PC-9 (cell line): ENCODE measurements at regions of chrX and their contacts with region 1.

Region 1: DNA sequence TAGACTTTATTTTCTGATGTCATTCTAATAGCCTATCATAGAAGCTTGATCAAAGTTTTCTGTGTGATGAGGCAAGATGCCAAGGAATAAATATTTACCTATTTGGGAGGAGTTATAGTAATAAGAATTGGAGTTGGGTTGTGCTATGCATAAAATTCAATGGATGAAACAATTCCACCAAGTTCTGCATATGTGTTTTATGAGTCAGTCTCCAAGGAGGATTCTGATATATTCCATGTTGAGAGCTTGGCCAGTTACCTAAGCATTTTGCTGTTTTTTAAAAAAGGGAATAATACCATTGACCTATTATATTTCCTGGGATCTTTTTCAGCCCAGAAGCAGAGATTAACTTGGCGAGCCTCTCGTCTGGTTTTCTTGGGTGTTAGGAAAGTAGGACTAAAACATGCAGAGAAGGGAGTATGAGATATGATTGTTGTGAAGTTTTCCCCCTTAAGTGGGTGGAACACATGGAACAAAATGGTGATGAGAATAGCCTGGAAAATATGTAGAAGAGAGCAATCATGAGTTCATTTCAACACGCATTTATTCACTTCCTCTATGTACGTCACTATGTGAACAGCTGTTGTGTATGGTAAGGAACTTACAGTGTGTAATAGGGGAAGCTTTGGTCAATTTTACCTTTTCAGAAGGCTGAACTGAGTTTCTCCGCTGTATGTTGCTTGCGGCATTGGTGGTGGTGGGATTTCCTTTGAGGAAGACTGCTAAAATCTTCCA is 39.2 kb downstream of the POLA1 start:
- DNase-seq: no peak
- H3K4me3 ChIP-seq: no peak overlapping the region
- H3K27ac ChIP-seq: no peak overlapping the region
- H3K4me1 ChIP-seq: no peaks in the 10 kb centered on the region
- H3K27me3 ChIP-seq: no peaks in the 10 kb centered on the region
- CTCF ChIP-seq: no peak

Region 2: GRCh38 chrX:24553011-24553410 is 179.9 kb before region 1 on chrX:
- CTCF ChIA-PET with region 1: no interaction called
- POLR2A ChIA-PET with region 1: no interaction called
- intact Hi-C with region 1: no loop called
- DNase-seq: no peak
- H3K4me3 ChIP-seq: no peak overlapping the region
- H3K27ac ChIP-seq: no peak overlapping the region
- H3K4me1 ChIP-seq: no peaks in the 10 kb centered on the region
- H3K27me3 ChIP-seq: peaks cover 10% of the 10 kb centered on the region
- CTCF ChIP-seq: no peak

Region 3: DNA sequence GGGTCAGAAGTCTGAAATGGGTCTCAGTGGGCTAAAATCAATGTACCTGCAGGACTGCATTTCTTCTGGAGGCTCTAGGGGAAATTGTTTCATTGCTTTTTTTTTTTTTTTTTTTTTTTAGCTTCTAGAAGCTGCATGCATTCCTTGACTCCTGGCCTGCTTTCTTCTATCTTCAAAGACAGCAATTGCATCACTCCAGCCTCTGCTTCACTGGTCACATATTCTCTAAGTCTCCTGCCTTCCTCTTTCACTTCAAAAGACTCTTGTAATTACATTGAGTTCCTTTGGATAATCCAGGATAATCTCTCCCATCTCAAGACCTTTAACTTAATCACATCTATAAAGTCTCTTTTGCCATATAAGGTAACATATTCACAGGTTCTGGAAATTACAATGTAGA is 74.5 kb before region 1 on chrX:
- CTCF ChIA-PET with region 1: no interaction called
- POLR2A ChIA-PET with region 1: no interaction called
- intact Hi-C with region 1: no loop called
- DNase-seq: no peak
- H3K4me3 ChIP-seq: no peak overlapping the region
- H3K27ac ChIP-seq: no peak overlapping the region
- H3K4me1 ChIP-seq: no peaks in the 10 kb centered on the region
- H3K27me3 ChIP-seq: no peaks in the 10 kb centered on the region
- CTCF ChIP-seq: no peak

Region 4: DNA sequence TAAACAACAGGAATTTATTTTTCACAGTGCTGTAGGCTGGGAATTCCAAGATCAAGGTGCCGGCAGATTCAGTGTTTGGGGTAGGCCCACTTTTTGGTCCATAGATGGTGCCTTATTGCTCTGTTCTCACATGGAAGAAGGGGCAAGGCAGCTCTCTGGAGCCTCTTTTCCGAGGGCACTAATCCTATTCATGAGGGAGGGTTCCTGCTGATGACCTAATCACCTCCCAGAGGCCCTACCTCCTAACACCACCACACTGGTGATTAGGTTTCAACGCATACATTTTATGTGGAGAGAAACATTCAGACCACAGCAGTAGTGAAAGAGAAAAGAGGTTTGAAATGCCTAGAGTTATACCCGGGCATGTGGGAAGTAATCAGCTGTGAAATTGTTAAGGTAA is 40.6 kb before region 1 on chrX:
- CTCF ChIA-PET with region 1: no interaction called
- POLR2A ChIA-PET with region 1: no interaction called
- intact Hi-C with region 1: no loop called
- DNase-seq: no peak
- H3K4me3 ChIP-seq: no peak overlapping the region
- H3K27ac ChIP-seq: no peak overlapping the region
- H3K4me1 ChIP-seq: peaks cover 13% of the 10 kb centered on the region
- H3K27me3 ChIP-seq: no peaks in the 10 kb centered on the region
- CTCF ChIP-seq: no peak

Region 5: GRCh38 chrX:24777660-24778059 is 44.7 kb after region 1 on chrX:
- CTCF ChIA-PET with region 1: no interaction called
- POLR2A ChIA-PET with region 1: no interaction called
- intact Hi-C with region 1: loop called (anchors 1 kb)
- DNase-seq: no peak
- H3K4me3 ChIP-seq: no peak overlapping the region
- H3K27ac ChIP-seq: no peak overlapping the region
- H3K4me1 ChIP-seq: no peaks in the 10 kb centered on the region
- H3K27me3 ChIP-seq: no peaks in the 10 kb centered on the region
- CTCF ChIP-seq: no peak